ENCODE measurements at regions of chr22 and their contacts with region 1.

Region 1: GRCh38 chr22:43537014-43537585 is 125.3 kb downstream of the MPPED1 start:
- DNase-seq: no peak

Region 2: GRCh38 chr22:43777049-43777685 is 240.1 kb after region 1 on chr22:
- intact Hi-C with region 1: no loop called
- DNase-seq: no peak

Region 3: DNA sequence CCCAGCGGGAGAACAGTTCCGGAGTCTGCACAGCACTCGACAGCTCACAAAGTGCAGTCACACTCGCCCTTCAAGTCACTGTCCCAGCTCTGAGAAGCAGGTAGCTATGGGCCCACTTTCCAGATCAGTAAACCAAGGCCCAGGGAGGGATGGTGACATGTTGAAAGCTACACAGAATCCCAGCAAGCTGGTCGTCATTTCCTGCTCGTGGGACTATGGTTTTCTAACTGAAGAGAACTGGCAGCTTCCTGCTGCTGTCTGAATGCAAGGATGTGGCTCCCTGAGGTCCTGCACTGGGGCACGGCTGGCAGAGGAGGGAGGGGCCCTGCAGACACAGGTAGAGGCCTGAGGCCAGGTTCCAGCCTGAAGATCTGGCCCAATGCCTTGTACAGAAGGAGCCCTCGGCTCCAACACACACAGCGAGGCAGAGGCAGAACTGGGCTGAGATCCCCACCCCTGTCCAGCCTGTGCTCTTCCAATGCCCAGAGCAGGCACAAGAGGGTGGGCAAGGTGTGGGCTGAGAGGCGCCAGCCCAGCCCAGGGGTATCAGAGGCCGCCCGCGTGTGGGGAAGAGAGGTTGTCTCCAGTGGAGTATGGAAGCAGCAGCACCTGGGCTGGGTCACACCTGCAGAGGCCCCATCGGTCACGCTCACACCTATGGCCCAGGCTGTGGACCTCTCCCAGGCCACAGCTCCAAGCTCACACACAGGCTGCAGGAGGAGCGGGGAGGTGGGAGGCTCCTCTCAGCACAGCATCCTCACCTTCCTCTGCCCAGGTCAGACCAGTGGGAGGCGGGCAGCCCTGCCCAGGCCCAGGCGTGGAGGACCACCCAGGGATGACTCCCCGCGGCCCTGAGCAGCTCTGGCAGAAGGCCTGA is 1353.6 kb after region 1 on chr22:
- intact Hi-C with region 1: loop called in 1 of 2 experiments (anchors 10 kb)
- DNase-seq: no peak